Activated B cell treated with CpG ODN at 0.5 μM for 24 hours (primary cell): ENCODE measurements at regions of chr19 and their contacts with region 1.

Region 1: DNA sequence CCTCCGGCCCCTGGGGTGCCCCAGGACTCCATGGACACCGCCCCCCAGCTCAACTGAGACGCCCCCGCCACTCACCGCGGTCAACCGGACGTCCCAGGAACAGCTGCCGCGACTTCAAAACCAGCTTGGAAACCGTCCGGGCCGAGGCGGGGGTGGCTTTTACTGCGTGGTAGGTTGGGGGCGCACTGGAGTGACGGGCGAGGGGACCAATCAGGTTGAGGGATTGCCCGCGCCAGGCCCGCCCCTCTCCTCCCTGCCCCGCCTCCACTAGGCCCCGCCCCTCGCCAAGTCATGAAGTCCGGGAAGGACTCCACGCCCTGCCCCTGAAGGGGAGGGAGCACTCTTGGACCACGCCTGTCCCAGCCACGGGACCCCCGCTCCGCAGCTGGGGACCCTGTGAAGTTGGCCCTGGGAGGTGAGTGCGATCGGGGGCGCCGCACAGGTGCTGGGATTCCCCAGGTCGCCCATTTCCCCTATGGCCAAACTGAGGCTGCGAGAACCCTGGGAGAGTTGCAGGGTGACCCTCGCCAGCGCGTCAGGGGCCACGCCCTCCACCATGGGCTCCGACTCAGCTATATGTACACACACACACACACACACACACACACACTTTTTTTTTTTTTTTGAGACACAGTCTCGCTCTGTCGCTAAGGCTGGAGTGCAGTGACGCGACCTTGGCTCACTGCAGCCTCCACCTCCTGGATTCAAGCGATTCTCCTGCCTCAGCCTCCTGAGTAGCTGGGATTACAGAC is at the start of gene PLIN3:
- DNase-seq: peak; percentile 90
- ATAC-seq: peak; percentile 95
- H3K4me3 Mint-ChIP-seq: peak within 1 kb of the TSS; percentile 85
- H3K27ac Mint-ChIP-seq: peak within 1 kb of the TSS; percentile 69
- H3K4me1 Mint-ChIP-seq: peaks cover 30% of the 10 kb centered on the region
- H3K27me3 Mint-ChIP-seq: no peaks in the 10 kb centered on the region
- CTCF ChIP-seq: no peak
- total RNA-seq, gene PLIN3: 28.7 and 29.0 TPM in 2 replicates

Region 2: GRCh38 chr19:4803736-4804695 is 63.7 kb before region 1 on chr19:
- CTCF ChIA-PET with region 1: interaction called, 25 read pairs
- POLR2A ChIA-PET with region 1: interaction called, 5 read pairs
- intact Hi-C with region 1: loop called (anchors 5 kb)
- DNase-seq: peak; percentile 55
- ATAC-seq: peak; percentile 94
- H3K4me3 Mint-ChIP-seq: no peak overlapping the region
- H3K27ac Mint-ChIP-seq: no peak overlapping the region
- H3K4me1 Mint-ChIP-seq: peaks cover 15% of the 10 kb centered on the region
- H3K27me3 Mint-ChIP-seq: no peaks in the 10 kb centered on the region
- CTCF ChIP-seq: peak; percentile 52

Region 3: GRCh38 chr19:4831304-4831978 is 36.3 kb before region 1 on chr19 and contains the start of gene TICAM1:
- CTCF ChIA-PET with region 1: no interaction called
- POLR2A ChIA-PET with region 1: interaction called, 4 read pairs
- intact Hi-C with region 1: loop called (anchors 2 kb)
- DNase-seq: peak; percentile 78
- ATAC-seq: peak; percentile 76
- H3K4me3 Mint-ChIP-seq: peak within 1 kb of the TSS; percentile 90
- H3K27ac Mint-ChIP-seq: peak within 1 kb of the TSS; percentile 94
- H3K4me1 Mint-ChIP-seq: peaks cover 40% of the 10 kb centered on the region
- H3K27me3 Mint-ChIP-seq: no peaks in the 10 kb centered on the region
- CTCF ChIP-seq: no peak
- total RNA-seq, gene TICAM1: 34.4 and 39.4 TPM in 2 replicates

Region 4: GRCh38 chr19:4916292-4917082 is 48.8 kb after region 1 on chr19:
- CTCF ChIA-PET with region 1: interaction called, 32 read pairs
- POLR2A ChIA-PET with region 1: interaction called, 13 read pairs
- intact Hi-C with region 1: loop called (anchors 1 kb)
- DNase-seq: peak; percentile 55
- ATAC-seq: peak; percentile 75
- H3K4me3 Mint-ChIP-seq: peak overlapping the region; percentile 98
- H3K27ac Mint-ChIP-seq: peak overlapping the region; percentile 93
- H3K4me1 Mint-ChIP-seq: peaks cover 54% of the 10 kb centered on the region
- H3K27me3 Mint-ChIP-seq: no peaks in the 10 kb centered on the region
- CTCF ChIP-seq: no peak

Region 5: DNA sequence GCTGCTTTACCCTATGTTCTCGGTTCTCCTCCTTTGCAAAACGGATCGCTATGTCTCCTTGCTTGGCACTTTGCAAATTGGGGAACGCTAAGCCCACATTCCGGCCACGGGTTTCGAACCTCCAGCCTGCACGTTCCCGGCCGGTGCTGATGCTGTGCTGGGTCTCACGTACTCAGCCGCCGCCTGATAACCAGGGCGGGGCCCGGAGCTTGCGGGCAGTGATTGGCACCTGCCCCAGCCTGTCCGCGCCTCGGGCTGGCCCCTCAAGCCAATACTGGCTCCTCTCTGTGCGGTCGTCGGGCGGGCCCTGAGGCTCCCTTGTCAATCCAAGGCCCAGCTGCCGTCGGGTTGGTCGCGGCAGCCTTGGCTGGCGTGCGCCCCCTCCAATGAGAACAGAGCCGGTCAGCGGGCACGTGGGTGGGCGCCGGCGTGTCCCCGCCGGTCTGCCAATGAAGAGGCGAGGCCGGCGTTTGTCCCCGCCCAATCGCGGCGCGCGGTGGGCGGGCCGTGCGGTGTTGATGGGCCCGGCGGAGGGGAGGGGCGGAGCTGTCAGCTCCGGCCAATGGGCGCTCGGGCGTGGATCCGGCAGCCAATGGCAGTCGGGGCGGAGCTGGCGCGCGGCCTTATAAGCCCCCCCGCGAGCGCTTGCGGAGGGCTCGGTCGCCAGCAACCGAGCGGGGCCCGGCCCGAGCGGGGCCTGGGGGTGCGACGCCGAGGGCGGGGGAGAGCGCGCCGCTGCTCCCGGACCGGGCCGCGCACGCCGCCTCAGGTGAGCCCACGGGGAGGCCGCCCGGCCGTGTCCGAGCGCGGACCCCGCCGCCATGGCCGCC is 101.0 kb after region 1 on chr19 and contains the start of gene KDM4B:
- CTCF ChIA-PET with region 1: interaction called, 3 read pairs
- POLR2A ChIA-PET with region 1: interaction called, 13 read pairs
- intact Hi-C with region 1: loop called (anchors 2 kb)
- DNase-seq: peak; percentile 99
- ATAC-seq: peak; percentile 89
- H3K4me3 Mint-ChIP-seq: peak within 1 kb of the TSS; percentile 88
- H3K27ac Mint-ChIP-seq: peak within 1 kb of the TSS; percentile 88
- H3K4me1 Mint-ChIP-seq: peaks cover 31% of the 10 kb centered on the region
- H3K27me3 Mint-ChIP-seq: no peaks in the 10 kb centered on the region
- CTCF ChIP-seq: no peak
- total RNA-seq, gene KDM4B: 76.4 and 88.9 TPM in 2 replicates

Region 6: GRCh38 chr19:5031231-5032100 is 163.8 kb after region 1 on chr19:
- CTCF ChIA-PET with region 1: interaction called, 89 read pairs
- POLR2A ChIA-PET with region 1: interaction called, 5 read pairs
- intact Hi-C with region 1: loop called (anchors 1 kb)
- DNase-seq: peak; percentile 85
- ATAC-seq: peak; percentile 94
- H3K4me3 Mint-ChIP-seq: no peak overlapping the region
- H3K27ac Mint-ChIP-seq: no peak overlapping the region
- H3K4me1 Mint-ChIP-seq: peaks cover 17% of the 10 kb centered on the region
- H3K27me3 Mint-ChIP-seq: no peaks in the 10 kb centered on the region
- CTCF ChIP-seq: peak; percentile 33

Region 7: DNA sequence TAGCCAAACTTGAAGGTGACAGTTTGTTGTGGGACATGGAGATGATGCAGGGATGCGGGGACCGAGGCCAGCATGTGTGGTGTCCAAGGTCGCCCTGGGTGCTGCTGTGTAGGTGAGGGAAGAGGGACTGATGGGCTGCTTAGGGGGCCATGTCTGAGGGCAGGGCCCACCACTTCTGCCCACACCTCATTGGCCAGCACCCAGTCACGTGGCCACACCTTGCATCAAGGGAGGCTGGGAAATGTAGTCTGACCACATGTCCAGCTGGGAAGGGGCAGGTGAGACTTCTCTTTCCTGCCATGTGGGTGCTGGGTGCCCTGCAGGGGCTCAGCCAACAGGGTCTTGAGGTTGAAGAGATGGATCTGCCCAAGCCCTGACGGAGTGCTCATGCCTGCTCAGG is 190.2 kb after region 1 on chr19:
- CTCF ChIA-PET with region 1: no interaction called
- POLR2A ChIA-PET with region 1: no interaction called
- intact Hi-C with region 1: no loop called
- DNase-seq: no peak
- ATAC-seq: no peak
- H3K4me3 Mint-ChIP-seq: no peak overlapping the region
- H3K27ac Mint-ChIP-seq: no peak overlapping the region
- H3K4me1 Mint-ChIP-seq: peaks cover 8% of the 10 kb centered on the region
- H3K27me3 Mint-ChIP-seq: no peaks in the 10 kb centered on the region
- CTCF ChIP-seq: no peak